Activated CD8-positive, alpha-beta memory T cell treated with anti-CD3 and anti-CD28 coated beads, Interleukin-2, amount 10 ng/mL, durations not matched to agents 7 days and 5 days (primary cell): ENCODE measurements at regions of chr12 and their contacts with region 1.

Region 1: DNA sequence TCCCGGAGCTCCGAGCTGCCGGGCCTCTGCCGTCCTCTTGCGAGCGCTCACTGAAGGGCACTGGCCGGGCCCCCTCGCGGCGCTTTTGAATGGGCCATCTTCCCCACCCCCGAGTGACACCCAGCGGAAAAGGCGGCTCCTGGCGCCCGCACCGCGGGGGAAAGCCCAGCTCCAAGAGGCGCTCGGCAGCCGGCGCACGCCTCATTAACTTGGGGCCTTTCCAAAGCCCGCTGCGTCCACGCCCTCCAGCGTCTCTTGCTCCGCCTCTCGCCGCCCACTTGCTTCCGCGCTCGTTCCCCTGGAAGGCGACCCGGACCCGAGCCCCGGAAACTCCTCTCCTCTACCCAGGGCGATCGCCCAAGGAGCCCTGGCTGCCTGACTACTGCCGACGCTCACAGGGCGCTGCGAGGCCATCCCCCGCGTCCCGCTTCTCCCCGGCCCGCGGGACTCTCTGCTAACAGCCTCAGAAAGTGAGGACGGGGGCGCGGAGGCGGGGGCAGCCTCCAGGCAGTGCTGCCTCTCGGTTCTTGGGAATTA is at the start of gene PHLDA1:
- DNase-seq: peak; percentile 98
- ATAC-seq: peak; percentile 81
- H3K4me3 Mint-ChIP-seq: peak within 1 kb of the TSS; percentile 89
- H3K27ac Mint-ChIP-seq: peak within 1 kb of the TSS; percentile 97
- H3K4me1 Mint-ChIP-seq: peaks cover 57% of the 10 kb centered on the region
- H3K27me3 Mint-ChIP-seq: peaks cover 4% of the 10 kb centered on the region
- total RNA-seq, gene PHLDA1: 36.8 to 95.6 TPM

Region 2: DNA sequence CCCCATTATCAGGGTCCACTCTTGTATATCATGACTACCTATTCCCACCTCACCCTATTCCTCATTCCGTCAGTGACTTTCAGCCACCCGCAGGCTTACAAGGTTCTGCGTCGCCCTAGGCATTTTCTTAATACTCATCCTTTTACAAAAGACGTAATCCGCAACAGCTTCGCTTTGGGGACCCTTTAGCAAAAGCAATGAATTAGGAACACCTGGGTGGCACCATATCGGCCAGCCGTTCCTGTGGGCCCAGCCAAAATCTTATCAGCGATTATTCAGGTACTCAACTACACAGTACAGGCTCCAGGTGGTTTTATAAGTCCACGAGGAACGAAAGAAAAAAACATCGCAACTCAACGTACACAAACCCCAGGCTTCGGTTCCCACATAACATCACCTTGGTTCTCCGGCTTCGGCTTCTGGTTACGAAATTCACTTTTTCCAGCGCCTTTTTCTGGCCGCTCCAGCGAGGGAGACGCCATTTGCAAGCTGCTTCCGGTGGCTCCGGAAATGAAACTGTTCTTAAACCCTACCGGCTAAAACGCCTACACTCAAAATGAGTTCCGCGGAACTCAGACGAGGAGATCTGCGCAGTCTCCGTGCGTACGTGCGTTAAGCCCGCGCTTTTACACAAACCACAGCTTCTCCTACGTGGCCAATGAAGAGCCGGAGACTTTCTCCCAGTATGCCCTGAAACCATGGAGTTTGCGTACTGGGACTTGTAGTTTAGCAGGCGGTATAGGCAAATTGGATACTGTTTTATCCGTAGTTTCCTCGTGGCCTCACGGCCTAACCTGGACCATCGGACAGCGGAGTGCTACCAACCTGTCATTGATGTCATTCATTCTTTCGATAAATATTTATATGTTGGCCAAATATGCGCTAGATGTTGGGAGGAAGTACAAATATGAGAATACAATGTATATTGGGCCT is 520.2 kb before region 1 on chr12 and contains the start of gene KRR1:
- CTCF ChIA-PET with region 1: interaction called, 12 read pairs
- DNase-seq: peak; percentile 96
- ATAC-seq: peak; percentile 97
- H3K4me3 Mint-ChIP-seq: peak within 1 kb of the TSS; percentile 97
- H3K27ac Mint-ChIP-seq: peak within 1 kb of the TSS; percentile 99
- H3K4me1 Mint-ChIP-seq: peaks cover 34% of the 10 kb centered on the region
- H3K27me3 Mint-ChIP-seq: no peaks in the 10 kb centered on the region
- total RNA-seq, gene KRR1: 68.5 to 97.7 TPM

Region 3: DNA sequence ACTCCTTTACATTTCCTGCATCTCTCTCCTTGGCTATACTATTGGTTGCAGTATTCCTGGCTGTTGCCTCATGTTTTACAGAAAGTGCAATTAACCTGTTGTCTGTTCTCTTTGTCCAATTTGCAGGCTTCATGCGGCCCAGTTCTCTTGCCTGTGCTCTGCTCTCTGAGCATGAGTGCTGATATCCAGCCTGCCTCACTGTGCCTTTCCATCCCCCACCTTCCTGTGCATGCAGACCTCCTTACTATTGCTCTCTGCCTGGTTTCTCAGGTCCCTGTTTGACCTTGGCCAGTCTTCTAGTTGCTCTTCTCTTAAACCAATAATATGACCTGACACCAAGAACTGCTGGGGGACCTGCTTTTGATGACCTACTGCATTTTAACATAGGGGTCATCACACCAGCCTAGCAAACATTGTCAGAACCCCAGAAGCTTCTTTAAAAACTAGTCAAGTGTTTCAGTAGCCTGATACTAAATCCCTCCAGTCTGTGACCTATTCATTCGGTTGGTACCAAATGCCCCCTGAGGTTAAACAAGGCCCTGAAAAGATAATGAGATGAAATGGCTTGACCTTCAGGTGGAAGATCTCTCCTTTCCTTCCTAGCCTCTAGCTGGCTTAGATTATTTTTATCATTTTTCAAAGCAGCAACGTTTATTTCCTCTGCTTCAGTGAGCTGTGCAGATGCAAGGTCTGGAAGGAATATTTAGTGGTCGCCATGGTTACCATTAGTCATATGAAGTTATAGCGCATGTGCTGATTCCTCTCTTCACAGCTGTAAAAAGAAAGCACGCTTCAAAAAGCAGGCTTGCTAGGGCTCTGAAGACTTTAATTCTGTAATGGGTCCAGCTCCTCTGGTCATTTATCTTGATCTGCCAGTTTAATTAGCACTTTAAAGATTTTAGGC is 216.5 kb before region 1 on chr12:
- CTCF ChIA-PET with region 1: interaction called, 15 read pairs
- DNase-seq: no peak
- ATAC-seq: peak; percentile 50
- H3K4me3 Mint-ChIP-seq: no peak overlapping the region
- H3K27ac Mint-ChIP-seq: peak overlapping the region; percentile 2
- H3K4me1 Mint-ChIP-seq: peaks cover 48% of the 10 kb centered on the region
- H3K27me3 Mint-ChIP-seq: no peaks in the 10 kb centered on the region

Region 4: GRCh38 chr12:75939016-75939642 is 92.5 kb before region 1 on chr12:
- CTCF ChIA-PET with region 1: interaction called, 23 read pairs
- DNase-seq: no peak
- ATAC-seq: peak; percentile 22
- H3K4me3 Mint-ChIP-seq: no peak overlapping the region
- H3K27ac Mint-ChIP-seq: no peak overlapping the region
- H3K4me1 Mint-ChIP-seq: peaks cover 21% of the 10 kb centered on the region
- H3K27me3 Mint-ChIP-seq: no peaks in the 10 kb centered on the region

Region 5: DNA sequence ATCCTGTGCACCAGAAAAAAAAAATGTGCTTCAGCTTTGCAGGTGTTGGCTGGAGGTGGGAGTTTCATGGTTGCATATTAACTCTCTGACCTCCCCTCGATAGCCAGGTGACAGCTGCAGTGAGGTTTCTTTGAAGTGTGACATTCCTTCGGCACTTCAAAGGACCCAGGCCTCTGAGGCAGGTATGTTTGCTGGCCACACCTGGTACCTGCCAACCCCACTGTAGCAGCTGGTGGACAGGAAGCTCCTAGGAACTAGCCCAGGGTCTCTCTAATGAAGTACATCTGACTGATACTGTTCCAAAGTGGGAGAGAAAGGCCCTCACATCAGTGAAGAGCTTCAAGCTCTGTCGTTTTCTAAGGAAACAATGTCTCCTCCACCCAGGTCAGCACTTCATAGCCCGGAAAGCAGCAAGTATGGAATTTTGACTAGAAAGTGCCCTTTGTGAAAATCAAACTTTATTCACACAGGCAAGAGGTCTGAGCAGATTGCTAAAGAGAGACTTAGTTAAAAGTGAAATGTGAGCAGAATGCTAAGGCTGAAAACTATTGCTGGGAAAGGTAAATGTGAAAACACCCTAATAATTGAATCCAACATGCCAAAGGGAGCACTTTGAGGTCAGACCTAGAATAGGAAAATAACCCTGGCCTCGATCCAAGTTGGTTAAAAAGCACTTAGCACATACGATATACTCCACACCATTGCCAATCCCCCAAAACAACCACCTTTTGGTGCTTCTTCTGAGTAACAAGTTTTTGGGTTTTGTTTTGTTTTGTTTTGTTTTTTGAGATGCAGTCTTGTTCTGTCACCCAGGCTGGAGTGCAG is 71.3 kb before region 1 on chr12:
- CTCF ChIA-PET with region 1: interaction called, 14 read pairs
- DNase-seq: no peak
- ATAC-seq: no peak
- H3K4me3 Mint-ChIP-seq: no peak overlapping the region
- H3K27ac Mint-ChIP-seq: no peak overlapping the region
- H3K4me1 Mint-ChIP-seq: peaks cover 50% of the 10 kb centered on the region
- H3K27me3 Mint-ChIP-seq: no peaks in the 10 kb centered on the region

Region 6: GRCh38 chr12:76020731-76021672 is 10.6 kb before region 1 on chr12:
- CTCF ChIA-PET with region 1: interaction called, 86 read pairs
- DNase-seq: peak; percentile 92
- ATAC-seq: peak; percentile 77
- H3K4me3 Mint-ChIP-seq: peak overlapping the region; percentile 66
- H3K27ac Mint-ChIP-seq: peak overlapping the region; percentile 100
- H3K4me1 Mint-ChIP-seq: peaks cover 71% of the 10 kb centered on the region
- H3K27me3 Mint-ChIP-seq: no peaks in the 10 kb centered on the region

Region 7: DNA sequence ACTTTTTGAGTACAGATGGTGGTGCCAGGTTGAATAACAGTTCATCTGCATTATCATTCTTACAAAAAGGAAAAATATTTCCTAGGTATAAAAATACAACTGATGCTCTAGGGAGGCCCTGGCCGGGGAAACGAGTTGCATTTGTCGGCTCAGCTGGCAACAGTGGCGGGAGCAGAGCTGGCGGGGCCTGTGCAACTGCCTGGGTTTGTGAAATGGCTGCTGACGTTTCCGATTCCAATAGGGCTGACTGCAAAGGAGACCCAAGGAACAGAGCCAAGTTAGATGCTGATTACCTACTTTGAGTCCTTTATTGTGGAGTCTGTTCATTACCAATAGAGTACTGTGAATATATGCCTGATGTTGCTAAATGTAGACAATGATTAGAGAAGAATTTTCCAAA is 25.7 kb after region 1 on chr12:
- CTCF ChIA-PET with region 1: no interaction called
- DNase-seq: no peak
- ATAC-seq: no peak
- H3K4me3 Mint-ChIP-seq: no peak overlapping the region
- H3K27ac Mint-ChIP-seq: no peak overlapping the region
- H3K4me1 Mint-ChIP-seq: peaks cover 22% of the 10 kb centered on the region
- H3K27me3 Mint-ChIP-seq: no peaks in the 10 kb centered on the region